Sigmoid colon (tissue), 7 donors: ENCODE measurements at regions of chr2 and their contacts with region 1.

Region 1: DNA sequence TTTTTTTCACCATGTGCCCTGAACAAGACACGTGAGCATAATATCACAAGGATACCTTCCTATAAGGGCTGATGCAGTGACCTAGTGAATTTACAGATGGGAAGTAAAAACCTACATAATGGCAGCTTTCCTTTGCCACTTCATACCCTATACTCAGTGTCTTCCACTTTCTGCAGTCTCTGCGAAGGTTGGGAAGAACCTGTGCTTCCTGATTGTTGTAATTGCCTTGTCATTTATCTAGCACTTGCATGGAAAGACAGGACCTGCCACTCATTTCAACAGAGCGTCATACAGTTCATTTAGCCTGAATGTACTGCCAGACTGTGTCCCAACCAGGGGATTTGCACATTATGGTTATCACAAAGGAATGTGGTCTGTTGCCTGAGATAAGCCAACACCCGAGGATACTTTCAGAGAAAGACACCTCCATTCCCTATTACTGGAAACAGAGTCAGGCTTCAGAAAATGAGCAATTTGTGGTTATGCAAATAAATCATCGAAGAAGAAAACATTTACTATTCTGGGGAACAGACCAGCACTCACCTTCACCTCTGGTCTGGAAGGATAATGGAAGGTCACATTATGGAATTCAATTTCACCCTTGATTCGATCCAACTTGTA is 55.0 kb downstream of the ABCB11 start:
- DNase-seq: no peak
- H3K4me3 ChIP-seq: no peak overlapping the region
- H3K27ac ChIP-seq: no peak overlapping the region
- H3K4me1 ChIP-seq: no peaks in the 10 kb centered on the region
- H3K27me3 ChIP-seq: no peaks in the 10 kb centered on the region
- CTCF ChIP-seq: no peak
- EP300 ChIP-seq: no peak
- POLR2A ChIP-seq: no peak

Region 2: DNA sequence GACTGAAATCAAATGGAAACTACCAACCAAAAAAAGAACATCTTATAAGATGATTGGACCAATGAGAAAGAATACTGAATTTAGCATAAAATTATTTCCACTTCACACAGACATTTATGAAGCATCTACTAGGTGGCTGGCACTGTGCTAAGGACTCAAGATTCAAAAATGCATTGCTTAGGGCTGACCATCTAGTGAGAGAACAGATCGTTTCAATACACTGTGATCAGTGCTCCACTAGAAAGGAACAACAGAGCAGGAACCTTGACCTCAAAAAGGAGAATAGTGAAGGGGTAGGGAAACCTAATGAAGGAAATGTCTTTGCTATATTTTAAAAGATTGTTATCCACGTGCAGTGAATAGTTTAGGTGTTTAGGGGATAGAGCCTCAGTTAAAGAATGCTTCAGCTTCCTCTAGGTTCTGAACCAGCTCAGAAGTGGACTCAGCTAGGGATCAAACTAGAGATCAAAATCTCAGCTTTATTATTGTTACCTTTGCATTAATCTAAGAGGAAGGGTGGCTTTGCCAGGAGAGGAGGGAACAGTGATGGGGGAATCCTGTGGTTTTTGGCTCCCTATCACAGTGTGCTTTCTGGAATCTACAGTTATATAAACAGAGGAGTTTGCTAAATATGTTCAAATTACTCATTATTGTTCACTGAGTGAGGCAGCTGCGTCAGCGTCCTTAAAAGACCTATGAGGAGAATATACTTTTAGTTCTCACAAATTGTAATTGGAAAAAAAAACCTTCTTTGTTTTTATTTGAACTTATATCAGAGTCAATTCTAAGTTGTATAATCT is 487.0 kb after region 1 on chr2:
- intact Hi-C with region 1: loop called (anchors 10 kb)
- DNase-seq: no peak
- H3K4me3 ChIP-seq: no peak overlapping the region
- H3K27ac ChIP-seq: no peak overlapping the region
- H3K4me1 ChIP-seq: peaks cover 0 to 8% (median 6%) of the 10 kb centered on the region in 4 donors
- H3K27me3 ChIP-seq: no peaks in the 10 kb centered on the region
- CTCF ChIP-seq: no peak
- EP300 ChIP-seq: no peak
- POLR2A ChIP-seq: no peak